Transverse colon (tissue), 4 donors: ENCODE measurements at regions of chr11 and their contacts with region 1.

Region 1: DNA sequence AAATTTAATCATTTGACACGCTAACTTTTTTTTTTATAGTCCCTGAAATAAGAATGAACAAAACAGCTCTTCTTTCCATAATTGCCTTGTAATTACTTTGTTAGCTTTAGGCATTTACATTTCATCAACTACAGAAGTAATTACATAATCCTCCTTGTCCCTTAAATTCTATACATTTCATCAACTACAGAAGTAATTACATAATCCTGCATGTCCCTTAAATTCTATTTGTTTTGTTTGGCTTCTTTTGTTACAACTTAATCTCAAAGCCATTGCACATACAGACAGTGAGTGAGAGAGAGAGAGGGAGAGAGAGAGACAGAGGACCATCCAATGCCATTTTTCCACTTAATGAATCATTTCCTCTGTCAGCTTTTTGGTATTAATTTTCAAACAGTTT is 873.2 kb downstream of the METTL15 start:
- DNase-seq: no peak
- H3K4me3 ChIP-seq: no peak overlapping the region
- H3K27ac ChIP-seq: no peak overlapping the region
- H3K4me1 ChIP-seq: no peaks in the 10 kb centered on the region
- H3K27me3 ChIP-seq: no peaks in the 10 kb centered on the region
- CTCF ChIP-seq: no peak
- EP300 ChIP-seq: no peak
- POLR2A ChIP-seq: no peak

Region 2: DNA sequence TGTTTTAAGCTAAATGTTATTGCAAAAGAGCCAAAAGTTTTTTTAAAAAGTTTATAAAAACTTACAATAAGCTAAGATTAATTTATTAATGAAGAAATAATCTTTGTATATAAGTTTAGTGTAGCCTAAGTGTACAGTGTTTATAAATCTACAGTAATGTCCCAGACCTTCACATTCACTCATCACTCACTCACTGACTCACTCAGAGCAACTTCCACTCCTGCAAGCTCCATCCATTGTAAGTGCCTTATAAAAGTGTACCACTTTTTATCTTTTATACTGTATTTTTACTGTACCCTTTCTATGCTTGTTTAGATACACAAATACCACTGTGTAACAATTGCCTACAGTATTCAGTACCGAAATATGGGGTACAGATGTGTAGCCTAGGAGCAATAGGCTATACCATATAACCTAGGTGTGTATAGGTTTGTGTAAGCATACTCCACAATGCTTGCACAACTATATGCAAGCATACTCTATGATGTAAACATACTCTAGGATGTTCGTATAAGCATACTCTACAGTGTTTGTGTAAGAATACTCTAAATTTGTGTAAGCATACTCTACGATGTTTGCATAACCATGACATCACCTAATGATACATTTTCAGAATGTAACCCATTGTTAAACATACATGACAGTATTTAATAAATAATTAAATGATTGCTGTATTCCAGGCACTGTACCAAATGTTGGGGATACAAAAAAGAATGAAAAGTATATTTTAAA is 82.4 kb after region 1 on chr11:
- in situ Hi-C with region 1: no loop called
- intact Hi-C with region 1: loop called (anchors 5 kb)
- DNase-seq: no peak
- H3K4me3 ChIP-seq: no peak overlapping the region
- H3K27ac ChIP-seq: no peak overlapping the region
- H3K4me1 ChIP-seq: no peaks in the 10 kb centered on the region
- H3K27me3 ChIP-seq: no peaks in the 10 kb centered on the region
- CTCF ChIP-seq: no peak
- EP300 ChIP-seq: no peak
- POLR2A ChIP-seq: no peak